ENCODE measurements at regions of chr6 and their contacts with region 1.

Region 1: DNA sequence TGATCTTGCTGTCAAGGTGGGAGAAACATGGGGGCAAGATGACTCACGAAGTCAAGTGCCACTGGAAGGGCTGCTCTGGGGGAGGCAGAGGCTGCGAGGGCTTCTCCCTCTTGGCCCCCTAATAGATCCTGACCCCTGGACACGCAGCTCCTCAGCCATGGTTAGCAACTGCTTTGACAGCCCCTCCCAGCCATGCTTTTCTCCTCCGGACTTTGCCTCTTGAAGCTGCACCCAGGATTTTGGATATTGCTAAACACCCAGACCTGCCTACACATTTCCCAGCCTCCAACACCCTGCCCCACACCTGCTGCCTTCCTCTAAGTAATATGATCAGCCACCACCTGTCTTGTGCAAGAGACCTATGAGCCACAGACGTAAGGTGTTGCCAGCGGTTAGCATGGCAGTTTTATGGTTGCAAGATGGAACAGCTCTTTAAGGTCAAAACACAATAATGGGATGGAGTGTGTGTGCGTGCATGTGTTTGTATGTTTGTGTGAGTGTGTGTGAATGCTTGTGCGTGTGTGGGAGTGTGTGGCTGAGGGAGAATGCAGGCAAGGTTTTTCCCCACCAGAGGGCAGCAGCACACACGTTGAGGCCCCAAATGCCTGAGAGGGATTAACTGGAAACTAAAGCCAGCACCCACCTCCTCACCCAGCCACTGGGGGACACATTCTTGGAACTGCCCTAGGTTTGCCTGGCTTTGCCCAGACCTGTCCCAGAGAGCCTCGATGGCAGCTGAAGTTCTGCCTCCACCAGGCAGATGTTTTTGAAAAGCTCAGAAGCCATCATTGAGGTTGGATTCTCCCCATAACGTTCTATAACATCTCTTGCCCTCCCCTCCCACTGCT is 2.5 kb downstream of the IP6K3 start:
- DNase-seq: peak; percentile 96
- H3K4me3 ChIP-seq: no peak overlapping the region
- H3K27ac ChIP-seq: no peak overlapping the region
- H3K4me1 ChIP-seq: peaks cover 35% of the 10 kb centered on the region
- H3K27me3 ChIP-seq: no peaks in the 10 kb centered on the region
- CTCF ChIP-seq: peak; percentile 96 to 97

Region 2: GRCh38 chr6:33711140-33712129 is 32.8 kb before region 1 on chr6 and contains the start of gene UQCC2:
- CTCF ChIA-PET with region 1: interaction called, 4 read pairs
- dilution Hi-C with region 1: no loop called
- in situ Hi-C with region 1: no loop called
- intact Hi-C with region 1: loop called (anchors 1 kb)
- DNase-seq: peak; percentile 93
- H3K4me3 ChIP-seq: peak within 1 kb of the TSS; percentile 81 to 97 (median 84)
- H3K27ac ChIP-seq: peak within 1 kb of the TSS; percentile 91
- H3K4me1 ChIP-seq: peaks cover 23% of the 10 kb centered on the region
- H3K27me3 ChIP-seq: no peaks in the 10 kb centered on the region
- CTCF ChIP-seq: peak; percentile 63 to 88
- total RNA-seq, gene UQCC2: 12.3 to 65.2 TPM

Region 3: DNA sequence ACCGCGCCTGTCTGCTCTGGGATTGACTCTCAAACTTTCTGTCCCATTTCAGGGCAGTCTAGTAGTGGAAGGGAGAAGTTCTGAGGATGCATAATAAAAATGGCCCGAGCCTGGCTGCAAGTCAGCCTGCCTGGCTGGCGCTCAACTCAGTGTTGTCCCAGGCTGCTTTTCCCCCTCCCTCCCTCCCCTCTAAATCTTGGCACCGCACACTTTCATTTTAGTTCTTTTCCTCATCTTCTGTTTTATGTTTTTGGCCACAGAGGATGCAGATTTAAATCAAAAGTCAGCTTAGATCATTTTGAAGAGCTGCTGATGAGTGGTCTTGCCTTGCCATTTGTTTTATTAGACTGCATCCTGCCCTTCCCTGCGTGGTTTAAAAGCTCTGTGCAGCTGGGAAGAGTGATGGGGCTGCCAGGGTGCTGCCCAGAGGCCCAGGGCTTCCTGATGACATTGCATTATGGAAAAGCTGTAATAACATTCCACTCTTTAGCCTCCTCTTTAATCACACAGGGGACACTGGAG is 26.2 kb before region 1 on chr6:
- CTCF ChIA-PET with region 1: interaction called, 4 read pairs
- dilution Hi-C with region 1: no loop called
- in situ Hi-C with region 1: no loop called
- intact Hi-C with region 1: loop called (anchors 1 kb)
- DNase-seq: no peak
- H3K4me3 ChIP-seq: no peak overlapping the region
- H3K27ac ChIP-seq: no peak overlapping the region
- H3K4me1 ChIP-seq: peaks cover 24% of the 10 kb centered on the region
- H3K27me3 ChIP-seq: no peaks in the 10 kb centered on the region
- CTCF ChIP-seq: no peak

Measured in mammary epithelial cell (primary cell).